ENCODE measurements at regions of chr12 and their contacts with region 1.

Region 1: GRCh38 chr12:57487597-57488401 is at the start of gene MARS1:
- DNase-seq: peak; percentile 97
- H3K4me3 Mint-ChIP-seq: peak within 1 kb of the TSS; percentile 97
- H3K27ac Mint-ChIP-seq: peak within 1 kb of the TSS; percentile 94
- H3K4me1 Mint-ChIP-seq: peaks cover 49% of the 10 kb centered on the region
- H3K27me3 Mint-ChIP-seq: no peaks in the 10 kb centered on the region
- total RNA-seq, gene MARS1: 481 to 489 TPM

Region 2: DNA sequence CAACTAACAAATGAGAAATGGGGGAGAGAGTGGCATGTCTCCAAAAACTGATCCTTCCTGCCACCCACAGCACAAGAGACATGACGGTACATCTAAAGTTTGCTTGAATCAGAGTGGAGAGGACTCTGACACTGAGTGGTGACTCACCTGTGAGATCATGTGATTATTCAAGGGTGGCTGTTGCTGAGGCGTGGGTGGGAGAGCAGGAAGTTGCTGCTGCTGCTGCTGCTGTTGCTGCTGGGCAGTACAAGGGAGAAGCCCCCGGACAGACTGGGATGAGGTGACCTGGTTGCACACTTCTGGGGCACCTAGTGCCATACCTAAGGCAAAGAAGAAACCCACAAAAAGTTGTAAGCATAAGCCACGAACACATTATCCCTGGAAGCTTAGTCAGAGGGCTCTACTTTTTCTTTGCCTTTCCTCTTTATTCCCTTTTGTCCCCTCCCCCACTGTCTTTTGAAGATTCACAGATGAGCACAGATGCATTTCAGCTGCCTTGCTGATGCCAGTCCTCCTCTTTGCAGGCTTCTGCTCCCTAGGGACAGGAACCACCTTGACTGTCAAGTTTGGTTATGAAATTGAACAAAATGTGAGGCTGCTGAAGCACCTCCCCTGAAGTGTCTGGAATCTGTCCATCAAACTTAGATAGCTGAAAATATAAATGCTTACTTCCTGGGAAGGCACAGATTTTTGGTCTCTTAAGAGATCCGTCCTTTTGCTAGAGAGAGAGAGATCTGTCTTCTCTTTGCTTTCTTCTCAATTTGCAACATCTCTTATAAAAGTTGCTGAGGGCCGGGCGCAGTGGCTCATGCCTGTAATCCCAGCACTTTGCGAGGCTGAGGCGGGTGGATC is 207.4 kb before region 1 on chr12:
- CTCF ChIA-PET with region 1: no interaction called
- intact Hi-C with region 1: loop called (anchors 1 kb)
- DNase-seq: peak; percentile 90
- H3K4me3 Mint-ChIP-seq: peak overlapping the region; percentile 46
- H3K27ac Mint-ChIP-seq: peak overlapping the region; percentile 90
- H3K4me1 Mint-ChIP-seq: peaks cover 28% of the 10 kb centered on the region
- H3K27me3 Mint-ChIP-seq: no peaks in the 10 kb centered on the region

Region 3: GRCh38 chr12:57546438-57547383 is 58.9 kb after region 1 on chr12 and contains the start of gene DCTN2:
- CTCF ChIA-PET with region 1: no interaction called
- intact Hi-C with region 1: loop called (anchors 1 kb)
- DNase-seq: peak; percentile 98
- H3K4me3 Mint-ChIP-seq: peak within 1 kb of the TSS; percentile 91
- H3K27ac Mint-ChIP-seq: peak within 1 kb of the TSS; percentile 82
- H3K4me1 Mint-ChIP-seq: peaks cover 47% of the 10 kb centered on the region
- H3K27me3 Mint-ChIP-seq: no peaks in the 10 kb centered on the region
- total RNA-seq, gene DCTN2: 65.1 to 71.7 TPM

Measured in activated naive CD4-positive, alpha-beta T cell treated with anti-CD3 and anti-CD28 coated beads for 36 hours (primary cell).